A673 (cell line): ENCODE measurements at regions of chr1 and their contacts with region 1.

Region 1: DNA sequence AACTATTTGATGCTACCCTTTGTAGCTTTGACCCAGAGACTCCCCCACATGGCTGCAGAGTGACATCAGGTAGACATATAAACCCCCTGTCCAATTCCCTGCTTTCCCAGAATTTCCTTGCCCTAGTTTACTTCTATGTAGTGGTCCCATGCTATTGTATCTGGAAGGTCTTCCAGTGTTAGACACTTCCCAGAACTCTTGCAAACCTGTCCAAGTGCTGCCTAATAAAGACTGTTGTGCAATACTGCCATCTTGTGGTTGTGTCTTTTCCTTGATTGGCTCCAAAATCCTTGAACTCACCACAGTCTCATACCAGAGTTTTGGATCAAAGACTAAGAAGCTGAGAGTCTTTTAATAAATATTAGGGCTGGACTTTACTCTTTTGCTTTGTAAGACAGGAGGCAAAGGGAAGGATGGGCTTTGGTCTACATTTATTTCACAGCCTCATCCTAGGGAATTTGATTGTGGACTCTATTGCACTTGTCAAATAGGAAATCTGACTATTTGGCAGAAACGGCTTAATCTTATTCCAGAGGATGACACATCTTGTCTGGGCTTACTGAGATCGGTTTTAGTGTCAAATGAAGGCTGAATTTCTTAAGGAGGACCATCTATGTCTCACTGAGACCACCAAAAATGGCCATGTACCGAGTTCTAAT is 169.9 kb downstream of the LRRC7 start:
- DNase-seq: peak; percentile 84
- H3K4me3 ChIP-seq: no peak overlapping the region
- H3K27ac ChIP-seq: no peak overlapping the region
- H3K4me1 ChIP-seq: peaks cover 5% of the 10 kb centered on the region
- H3K27me3 ChIP-seq: no peaks in the 10 kb centered on the region
- CTCF ChIP-seq: peak; percentile 82

Region 2: GRCh38 chr1:68470388-68470970 is 1267.2 kb before region 1 on chr1:
- CTCF ChIA-PET with region 1: interaction called, 3 read pairs
- POLR2A ChIA-PET with region 1: no interaction called
- intact Hi-C with region 1: loop called (anchors 2 kb)
- DNase-seq: peak; percentile 37
- H3K4me3 ChIP-seq: no peak overlapping the region
- H3K27ac ChIP-seq: no peak overlapping the region
- H3K4me1 ChIP-seq: no peaks in the 10 kb centered on the region
- H3K27me3 ChIP-seq: no peaks in the 10 kb centered on the region
- CTCF ChIP-seq: peak; percentile 82

Region 3: GRCh38 chr1:68600049-68600661 is 1137.5 kb before region 1 on chr1:
- CTCF ChIA-PET with region 1: no interaction called
- POLR2A ChIA-PET with region 1: no interaction called
- intact Hi-C with region 1: loop called (anchors 10 kb)
- DNase-seq: peak; percentile 26
- H3K4me3 ChIP-seq: no peak overlapping the region
- H3K27ac ChIP-seq: no peak overlapping the region
- H3K4me1 ChIP-seq: no peaks in the 10 kb centered on the region
- H3K27me3 ChIP-seq: no peaks in the 10 kb centered on the region
- CTCF ChIP-seq: peak; percentile 76

Region 4: GRCh38 chr1:68819190-68819829 is 918.3 kb before region 1 on chr1:
- CTCF ChIA-PET with region 1: no interaction called
- POLR2A ChIA-PET with region 1: no interaction called
- intact Hi-C with region 1: loop called (anchors 2 kb)
- DNase-seq: peak; percentile 46
- H3K4me3 ChIP-seq: no peak overlapping the region
- H3K27ac ChIP-seq: no peak overlapping the region
- H3K4me1 ChIP-seq: peaks cover 4% of the 10 kb centered on the region
- H3K27me3 ChIP-seq: no peaks in the 10 kb centered on the region
- CTCF ChIP-seq: peak; percentile 62

Region 5: DNA sequence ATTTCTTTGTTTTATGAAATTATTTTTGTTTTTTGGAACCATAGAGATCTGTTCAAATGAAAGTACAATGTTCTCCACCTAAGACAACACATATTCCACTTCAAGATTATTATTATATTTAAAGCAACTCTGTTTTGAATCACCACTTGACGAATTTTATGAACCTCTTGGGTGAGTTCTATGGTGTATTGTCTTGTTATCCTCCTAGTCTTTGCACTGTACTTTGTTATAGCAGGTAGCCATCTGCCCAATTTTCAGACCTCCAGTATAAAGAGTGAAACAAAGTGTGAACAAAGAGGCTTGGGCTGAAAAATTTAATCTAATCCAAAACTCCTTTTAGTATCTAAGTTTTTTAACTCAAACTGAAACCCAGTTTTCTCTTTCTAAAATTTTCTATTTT is 99.0 kb before region 1 on chr1:
- CTCF ChIA-PET with region 1: no interaction called
- POLR2A ChIA-PET with region 1: no interaction called
- intact Hi-C with region 1: no loop called
- DNase-seq: no peak
- H3K4me3 ChIP-seq: no peak overlapping the region
- H3K27ac ChIP-seq: no peak overlapping the region
- H3K4me1 ChIP-seq: no peaks in the 10 kb centered on the region
- H3K27me3 ChIP-seq: no peaks in the 10 kb centered on the region
- CTCF ChIP-seq: no peak